ENCODE measurements at regions of chr3 and their contacts with region 1.

Region 1: DNA sequence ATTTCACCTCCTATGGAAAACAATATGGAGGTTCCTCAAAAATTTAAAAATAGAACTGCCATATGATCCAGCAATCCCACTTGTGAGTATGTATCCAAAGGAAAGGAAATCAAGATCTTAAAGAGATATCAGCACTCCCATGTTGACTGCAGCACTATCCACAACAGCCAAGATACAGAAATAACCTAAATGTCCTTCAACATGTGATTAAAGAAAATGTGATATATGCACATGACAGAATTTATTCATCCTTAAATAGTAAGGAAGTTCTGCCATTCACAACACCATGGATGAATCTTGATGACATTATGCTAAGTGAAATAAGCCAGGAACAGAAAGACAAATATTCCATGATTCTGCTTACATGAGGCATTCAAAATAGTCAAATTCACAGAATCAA is 303.6 kb upstream of the LRRN1 start:
- DNase-seq: no peak
- H3K4me3 ChIP-seq: no peak overlapping the region
- H3K27ac ChIP-seq: no peak overlapping the region
- H3K4me1 ChIP-seq: no peaks in the 10 kb centered on the region
- CTCF ChIP-seq: no peak

Region 2: GRCh38 chr3:3383461-3383860 is 112.2 kb before region 1 on chr3:
- CTCF ChIA-PET with region 1: no interaction called
- POLR2A ChIA-PET with region 1: interaction called, 3 read pairs
- intact Hi-C with region 1: loop called (anchors 2 kb)
- DNase-seq: no peak
- H3K4me3 ChIP-seq: no peak overlapping the region
- H3K27ac ChIP-seq: no peak overlapping the region
- H3K4me1 ChIP-seq: no peaks in the 10 kb centered on the region
- CTCF ChIP-seq: no peak

Region 3: DNA sequence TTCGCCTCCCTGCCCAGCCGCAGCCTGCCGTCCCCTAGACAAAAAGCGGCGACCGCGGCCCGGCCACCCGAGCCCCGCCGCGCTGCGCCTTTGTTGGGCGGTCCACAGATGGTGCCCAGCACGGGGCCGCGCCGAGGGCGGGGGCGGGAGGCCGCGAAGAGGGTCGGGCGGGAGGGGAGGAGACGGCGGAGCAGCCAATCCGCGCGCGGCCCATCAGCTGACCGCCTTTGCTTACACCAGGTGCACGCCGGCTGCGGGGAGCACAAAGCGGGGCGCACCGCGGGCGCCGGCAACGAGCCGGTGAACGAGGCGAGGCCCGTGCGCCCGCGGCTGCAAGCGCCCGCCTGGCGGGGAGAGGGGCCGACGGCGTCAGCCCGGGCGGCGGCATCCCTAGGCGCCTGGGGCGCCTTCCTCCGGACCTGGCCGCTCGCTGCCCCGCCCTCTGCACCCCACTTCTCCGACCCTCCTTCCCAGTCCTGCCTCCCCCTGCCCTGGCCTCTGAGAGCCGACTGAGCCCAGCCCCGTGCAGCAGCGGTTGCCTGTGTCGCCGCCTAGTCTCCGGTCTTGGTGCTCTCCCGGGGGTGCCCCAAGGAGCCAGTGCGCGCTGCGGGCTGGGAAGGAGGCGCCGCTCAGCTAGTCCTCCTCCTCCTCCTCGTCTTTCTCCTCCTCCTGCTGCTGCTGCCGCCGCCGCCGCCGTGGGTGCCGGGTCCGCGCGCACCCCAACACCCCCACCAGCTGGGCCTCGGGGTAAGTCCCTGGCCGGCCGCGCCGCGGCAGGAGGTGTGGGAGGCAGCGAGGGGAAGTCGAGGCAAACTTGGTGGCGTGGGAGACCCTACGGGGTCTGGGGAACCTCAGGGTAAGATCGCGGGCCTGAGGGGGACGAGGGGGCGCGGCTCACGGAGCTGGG is 303.8 kb after region 1 on chr3 and contains the start of gene LRRN1:
- CTCF ChIA-PET with region 1: no interaction called
- POLR2A ChIA-PET with region 1: no interaction called
- intact Hi-C with region 1: no loop called
- DNase-seq: no peak
- H3K4me3 ChIP-seq: no peak within 1 kb of the TSS
- H3K27ac ChIP-seq: no peak within 1 kb of the TSS
- H3K4me1 ChIP-seq: no peaks in the 10 kb centered on the region
- CTCF ChIP-seq: no peak
- total RNA-seq, gene LRRN1: not detected in 2 replicates

Measured in OCI-LY7 (cell line).